GM13977 (cell line): ENCODE measurements at regions of chr2 and their contacts with region 1.

Region 1: GRCh38 chr2:224938651-224939182 is 103.6 kb downstream of the DOCK10 start:
- DNase-seq: no peak
- CTCF ChIP-seq: no peak

Region 2: GRCh38 chr2:225002039-225002655 is 63.4 kb after region 1 on chr2:
- in situ Hi-C with region 1: loop called (anchors 10 kb)
- DNase-seq: peak; percentile 33
- CTCF ChIP-seq: peak; percentile 83